AG04450 (cell line): ENCODE measurements at regions of chr15 and their contacts with region 1.

Region 1: GRCh38 chr15:40869686-40870085 is 4.3 kb downstream of the RHOV start:
- DNase-seq: no peak
- H3K4me3 ChIP-seq: no peak overlapping the region
- H3K27ac ChIP-seq: peak overlapping the region; percentile 11
- H3K27me3 ChIP-seq: peaks cover 12% of the 10 kb centered on the region
- CTCF ChIP-seq: no peak

Region 2: GRCh38 chr15:40702077-40702476 is 167.6 kb before region 1 on chr15:
- CTCF ChIA-PET with region 1: interaction called, 10 read pairs
- POLR2A ChIA-PET with region 1: no interaction called
- DNase-seq: no peak
- H3K4me3 ChIP-seq: no peak overlapping the region
- H3K27ac ChIP-seq: no peak overlapping the region
- H3K27me3 ChIP-seq: no peaks in the 10 kb centered on the region
- CTCF ChIP-seq: peak; percentile 39

Region 3: DNA sequence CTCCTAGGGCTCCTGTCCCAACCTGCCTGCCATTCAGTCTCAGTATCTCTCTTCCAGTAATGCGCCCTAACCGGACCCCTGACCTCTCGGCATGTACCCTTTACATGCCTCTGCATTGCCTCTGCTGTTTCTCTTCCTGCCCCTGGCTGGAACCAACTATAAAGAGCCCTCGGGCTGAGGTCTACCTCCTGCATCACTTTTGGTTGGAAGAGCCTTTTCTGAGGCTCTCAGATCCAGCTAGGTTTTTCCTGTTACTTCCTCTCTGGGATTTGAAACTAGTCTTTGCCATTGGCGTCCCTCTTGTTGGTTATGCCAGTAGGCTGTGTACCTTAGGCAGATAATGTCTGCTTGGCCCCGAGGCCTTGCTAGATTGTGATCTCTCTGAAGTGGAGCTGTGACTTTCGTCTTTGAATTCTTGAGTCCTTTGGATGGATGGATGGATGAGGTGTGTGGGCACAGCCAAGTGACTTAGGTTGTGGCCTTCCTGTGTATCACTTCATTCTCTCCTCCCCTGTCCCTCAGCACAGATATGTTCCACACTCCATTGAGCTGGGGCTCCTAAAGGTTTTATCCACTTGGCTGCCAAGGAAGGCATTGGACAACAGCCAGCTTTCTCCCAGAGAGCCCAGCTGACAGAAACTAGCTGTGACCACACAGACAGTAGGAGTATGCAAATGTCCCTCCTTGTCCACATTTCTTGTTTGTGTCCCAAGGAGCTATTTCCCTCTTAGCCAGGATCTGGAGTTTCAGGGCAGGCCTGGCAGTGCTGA is 54.6 kb before region 1 on chr15:
- CTCF ChIA-PET with region 1: no interaction called
- POLR2A ChIA-PET with region 1: no interaction called
- DNase-seq: no peak
- H3K4me3 ChIP-seq: no peak overlapping the region
- H3K27ac ChIP-seq: no peak overlapping the region
- H3K27me3 ChIP-seq: no peaks in the 10 kb centered on the region
- CTCF ChIP-seq: no peak

Region 4: DNA sequence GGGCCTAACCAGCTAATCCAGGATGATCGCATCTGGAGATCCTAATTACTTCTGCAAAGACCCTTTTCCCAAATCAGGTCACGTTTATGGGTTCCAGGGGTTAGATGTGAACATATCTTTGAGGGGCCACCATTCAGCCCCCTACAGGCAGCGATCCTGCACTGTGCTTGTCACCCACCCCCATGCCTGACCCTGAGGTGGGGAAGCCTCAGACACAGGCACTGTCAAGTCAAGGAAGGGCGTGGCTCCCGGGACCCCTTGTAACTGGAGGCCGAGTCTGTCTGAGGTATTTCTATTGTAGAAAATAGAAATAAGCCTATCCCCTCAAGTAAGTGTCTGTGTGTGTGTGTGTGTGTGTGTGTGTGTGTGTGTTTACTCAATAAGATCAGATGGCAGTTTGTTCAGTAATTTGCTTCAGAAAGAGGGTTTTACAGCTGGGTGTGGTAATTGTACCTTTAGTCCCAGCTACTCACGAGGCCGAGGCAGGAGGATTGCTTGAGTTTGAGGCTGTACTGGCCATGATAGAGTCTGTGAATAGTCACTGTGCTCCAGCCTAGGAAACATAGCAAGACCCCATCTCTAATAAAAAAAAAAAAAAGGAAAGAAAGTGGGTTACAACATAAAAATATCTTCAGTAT is 17.3 kb before region 1 on chr15:
- CTCF ChIA-PET with region 1: no interaction called
- POLR2A ChIA-PET with region 1: no interaction called
- DNase-seq: no peak
- H3K4me3 ChIP-seq: no peak overlapping the region
- H3K27ac ChIP-seq: no peak overlapping the region
- H3K27me3 ChIP-seq: peaks cover 35% of the 10 kb centered on the region
- CTCF ChIP-seq: no peak